Activated CD4-positive, alpha-beta memory T cell treated with anti-CD3 and anti-CD28 coated beads, Interleukin-2, amount 10 ng/mL, durations not matched to agents 7 days and 5 days (primary cell): ENCODE measurements at regions of chr18 and their contacts with region 1.

Region 1: GRCh38 chr18:24488824-24489493 is 28.5 kb downstream of the HRH4 start:
- DNase-seq: no peak
- H3K4me3 Mint-ChIP-seq: no peak overlapping the region
- H3K27ac Mint-ChIP-seq: no peak overlapping the region
- H3K4me1 Mint-ChIP-seq: peaks cover 15% of the 10 kb centered on the region
- H3K27me3 Mint-ChIP-seq: peaks cover 23% of the 10 kb centered on the region

Region 2: GRCh38 chr18:24176727-24177416 is 312.1 kb before region 1 on chr18:
- CTCF ChIA-PET with region 1: interaction called, 27 read pairs
- POLR2A ChIA-PET with region 1: no interaction called
- DNase-seq: peak; percentile 44
- H3K4me3 Mint-ChIP-seq: no peak overlapping the region
- H3K27ac Mint-ChIP-seq: no peak overlapping the region
- H3K4me1 Mint-ChIP-seq: peaks cover 6% of the 10 kb centered on the region
- H3K27me3 Mint-ChIP-seq: peaks cover 3% of the 10 kb centered on the region

Region 3: DNA sequence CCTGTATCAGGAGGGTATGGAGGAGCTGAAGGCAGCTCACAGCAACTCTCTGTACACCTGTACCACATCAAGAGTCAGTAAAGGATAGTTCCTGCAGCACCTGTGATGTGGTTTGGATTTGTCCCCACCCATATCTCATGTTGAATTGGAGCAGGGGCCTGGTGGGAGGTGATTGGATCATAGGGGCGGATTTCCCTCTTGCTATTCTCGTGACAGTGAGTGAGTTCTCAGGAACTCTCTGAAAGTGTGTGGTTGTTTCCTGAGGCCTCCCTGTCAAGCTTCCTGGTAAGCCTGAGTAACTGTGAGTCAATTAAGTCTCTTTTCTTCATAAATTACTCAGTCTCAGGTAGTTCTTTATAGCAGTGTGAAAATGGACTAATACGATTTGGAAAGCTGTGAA is 120.2 kb before region 1 on chr18:
- CTCF ChIA-PET with region 1: interaction called, 23 read pairs
- POLR2A ChIA-PET with region 1: no interaction called
- DNase-seq: peak; percentile 18
- H3K4me3 Mint-ChIP-seq: no peak overlapping the region
- H3K27ac Mint-ChIP-seq: peak overlapping the region; percentile 38
- H3K4me1 Mint-ChIP-seq: peaks cover 23% of the 10 kb centered on the region
- H3K27me3 Mint-ChIP-seq: no peaks in the 10 kb centered on the region

Region 4: DNA sequence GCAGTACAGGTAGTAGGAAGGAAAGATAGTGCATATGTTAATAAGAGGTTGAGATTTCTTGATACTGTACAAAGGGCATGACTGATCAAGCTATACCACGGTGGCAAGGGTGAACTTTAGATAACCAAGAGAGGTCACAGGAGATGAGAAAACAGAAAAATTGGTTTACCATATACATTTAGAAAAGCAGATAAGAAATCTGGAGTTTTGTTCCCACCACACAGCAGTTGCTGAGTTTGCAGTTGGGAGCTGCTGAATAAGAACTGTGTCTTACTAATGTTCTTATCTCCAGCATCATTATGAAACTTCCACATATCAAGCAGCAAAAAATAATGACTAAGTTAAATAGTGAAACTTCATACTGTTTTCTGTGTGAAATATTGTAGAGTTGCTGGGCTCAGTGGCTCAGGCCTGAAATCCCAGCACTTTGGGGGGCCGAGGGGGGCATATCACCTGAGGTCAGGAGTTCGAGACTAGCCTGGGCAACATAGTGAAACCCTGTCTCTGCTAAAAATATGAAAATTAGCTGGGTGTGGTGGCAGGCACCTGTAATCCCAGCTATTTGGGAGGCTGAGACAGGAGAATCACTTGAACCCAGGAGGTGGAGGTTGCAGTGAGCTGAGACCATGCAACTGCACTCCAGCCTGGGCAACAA is 74.5 kb before region 1 on chr18:
- CTCF ChIA-PET with region 1: interaction called, 17 read pairs
- POLR2A ChIA-PET with region 1: no interaction called
- DNase-seq: peak; percentile 30
- H3K4me3 Mint-ChIP-seq: no peak overlapping the region
- H3K27ac Mint-ChIP-seq: no peak overlapping the region
- H3K4me1 Mint-ChIP-seq: peaks cover 27% of the 10 kb centered on the region
- H3K27me3 Mint-ChIP-seq: peaks cover 37% of the 10 kb centered on the region

Region 5: GRCh38 chr18:24446953-24447538 is 41.9 kb before region 1 on chr18:
- CTCF ChIA-PET with region 1: interaction called, 14 read pairs
- POLR2A ChIA-PET with region 1: interaction called, 3 read pairs
- DNase-seq: no peak
- H3K4me3 Mint-ChIP-seq: no peak overlapping the region
- H3K27ac Mint-ChIP-seq: no peak overlapping the region
- H3K4me1 Mint-ChIP-seq: peaks cover 9% of the 10 kb centered on the region
- H3K27me3 Mint-ChIP-seq: no peaks in the 10 kb centered on the region

Region 6: DNA sequence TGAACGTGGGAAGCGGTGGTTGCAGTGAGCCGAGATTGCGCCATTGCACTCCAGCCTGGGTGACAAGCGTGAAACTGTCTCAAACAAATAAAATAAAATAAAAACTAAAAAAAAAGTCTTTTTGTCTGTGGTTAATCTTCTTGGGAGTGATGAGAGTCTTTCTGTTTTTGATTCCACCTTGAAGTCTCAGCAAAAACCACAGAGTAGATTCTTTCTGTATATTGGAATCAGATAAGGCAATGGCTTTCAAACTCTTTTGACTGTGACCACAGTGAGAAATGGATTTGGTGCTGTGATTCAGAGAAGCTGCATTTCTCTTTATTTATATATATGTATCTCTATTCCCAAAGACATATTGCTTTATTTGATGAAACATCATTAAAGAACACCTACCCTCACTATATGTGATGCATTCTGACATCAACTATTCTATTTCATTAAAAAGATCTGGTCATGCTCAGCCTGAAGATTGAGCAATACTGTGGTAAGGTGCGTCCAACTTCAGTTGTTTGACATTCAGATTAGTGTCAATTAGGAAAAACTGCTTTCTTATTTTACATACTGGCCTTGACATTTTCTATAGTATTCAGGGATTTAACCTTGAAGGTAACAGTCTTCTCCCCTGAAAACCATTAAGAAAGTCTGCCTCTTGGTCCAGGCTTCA is 12.9 kb before region 1 on chr18:
- CTCF ChIA-PET with region 1: interaction called, 17 read pairs
- POLR2A ChIA-PET with region 1: interaction called, 3 read pairs
- DNase-seq: no peak
- H3K4me3 Mint-ChIP-seq: no peak overlapping the region
- H3K27ac Mint-ChIP-seq: no peak overlapping the region
- H3K4me1 Mint-ChIP-seq: peaks cover 6% of the 10 kb centered on the region
- H3K27me3 Mint-ChIP-seq: peaks cover 30% of the 10 kb centered on the region

Region 7: GRCh38 chr18:24584813-24585212 is 95.9 kb after region 1 on chr18:
- CTCF ChIA-PET with region 1: no interaction called
- POLR2A ChIA-PET with region 1: no interaction called
- DNase-seq: no peak
- H3K4me3 Mint-ChIP-seq: no peak overlapping the region
- H3K27ac Mint-ChIP-seq: no peak overlapping the region
- H3K4me1 Mint-ChIP-seq: no peaks in the 10 kb centered on the region
- H3K27me3 Mint-ChIP-seq: peaks cover 15% of the 10 kb centered on the region

Region 8: GRCh38 chr18:24616653-24617052 is 127.7 kb after region 1 on chr18:
- CTCF ChIA-PET with region 1: no interaction called
- POLR2A ChIA-PET with region 1: no interaction called
- DNase-seq: no peak
- H3K4me3 Mint-ChIP-seq: no peak overlapping the region
- H3K27ac Mint-ChIP-seq: no peak overlapping the region
- H3K4me1 Mint-ChIP-seq: no peaks in the 10 kb centered on the region
- H3K27me3 Mint-ChIP-seq: peaks cover 3% of the 10 kb centered on the region

Region 9: GRCh38 chr18:24726727-24727492 is 238.0 kb after region 1 on chr18:
- CTCF ChIA-PET with region 1: interaction called, 19 read pairs
- POLR2A ChIA-PET with region 1: no interaction called
- DNase-seq: peak; percentile 56
- H3K4me3 Mint-ChIP-seq: no peak overlapping the region
- H3K27ac Mint-ChIP-seq: no peak overlapping the region
- H3K4me1 Mint-ChIP-seq: no peaks in the 10 kb centered on the region
- H3K27me3 Mint-ChIP-seq: peaks cover 2% of the 10 kb centered on the region

Region 10: GRCh38 chr18:25019086-25019860 is 530.3 kb after region 1 on chr18:
- CTCF ChIA-PET with region 1: no interaction called
- POLR2A ChIA-PET with region 1: no interaction called
- DNase-seq: no peak
- H3K4me3 Mint-ChIP-seq: no peak overlapping the region
- H3K27ac Mint-ChIP-seq: no peak overlapping the region
- H3K4me1 Mint-ChIP-seq: no peaks in the 10 kb centered on the region
- H3K27me3 Mint-ChIP-seq: no peaks in the 10 kb centered on the region